Prostate gland (tissue), 2 donors: ENCODE measurements at regions of chr9 and their contacts with region 1.

Region 1: DNA sequence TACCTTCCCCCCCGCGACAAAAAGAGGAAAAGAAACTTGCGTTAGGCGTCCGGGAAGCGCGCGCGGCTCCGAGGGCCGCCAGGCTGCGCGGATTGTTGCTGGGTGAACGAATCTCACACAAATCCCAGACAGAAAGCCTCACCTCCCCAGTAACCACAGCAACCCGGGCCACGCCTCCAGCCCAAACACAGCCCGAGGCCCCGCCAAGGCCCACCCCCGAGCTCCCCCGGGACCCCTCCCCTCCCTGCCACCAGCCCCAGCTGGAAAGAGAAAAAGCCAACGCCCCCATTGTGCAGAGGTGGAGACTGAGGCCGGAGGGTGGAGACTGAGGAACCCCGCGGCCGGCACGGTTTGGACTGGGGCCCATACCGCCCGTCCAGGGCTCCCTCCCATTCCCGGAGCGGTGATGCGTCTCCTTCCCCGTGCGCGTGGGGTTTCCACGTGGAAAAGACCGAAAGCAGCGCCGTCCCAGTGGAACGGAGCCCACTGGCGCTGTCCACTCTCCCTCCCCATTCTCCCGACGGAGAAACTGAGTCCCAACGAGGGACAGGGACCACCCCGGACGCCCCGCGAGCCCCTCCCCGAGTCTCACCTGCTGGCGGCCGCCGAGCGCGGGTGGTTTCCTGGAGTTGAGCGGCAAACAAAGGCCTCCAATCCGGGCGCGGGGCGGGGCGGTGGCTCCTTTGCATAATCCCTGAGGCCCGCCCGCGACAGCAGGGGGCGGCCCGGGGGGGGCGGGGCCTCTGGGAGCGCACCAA is 10.2 kb upstream of the AKNA start:
- DNase-seq: peak; percentile 97
- H3K4me3 ChIP-seq: peak overlapping the region; percentile 56 to 81
- H3K27ac ChIP-seq: peak overlapping the region; percentile 70 to 80
- H3K4me1 ChIP-seq: peaks cover 11% of the 10 kb centered on the region
- H3K27me3 ChIP-seq: no peaks in the 10 kb centered on the region
- CTCF ChIP-seq: peak in 1 of 4 experiments; percentile 13
- POLR2A ChIP-seq: peak; percentile 77

Region 2: GRCh38 chr9:114538241-114538640 is 140.2 kb after region 1 on chr9:
- intact Hi-C with region 1: no loop called
- DNase-seq: peak; percentile 53
- H3K4me3 ChIP-seq: no peak overlapping the region
- H3K27ac ChIP-seq: no peak overlapping the region
- H3K4me1 ChIP-seq: no peaks in the 10 kb centered on the region
- H3K27me3 ChIP-seq: no peaks in the 10 kb centered on the region
- CTCF ChIP-seq: peak in 3 of 4 experiments; percentile 37 to 51 (median 46)
- POLR2A ChIP-seq: no peak

Region 3: GRCh38 chr9:114587385-114588202 is 189.6 kb after region 1 on chr9 and contains the start of gene ATP6V1G1:
- intact Hi-C with region 1: loop called (anchors 10 kb)
- DNase-seq: peak; percentile 99
- H3K4me3 ChIP-seq: peak within 1 kb of the TSS; percentile 72 to 86
- H3K27ac ChIP-seq: peak within 1 kb of the TSS; percentile 95 to 96
- H3K4me1 ChIP-seq: peaks cover 2% of the 10 kb centered on the region
- H3K27me3 ChIP-seq: no peaks in the 10 kb centered on the region
- CTCF ChIP-seq: peak in 2 of 4 experiments; percentile 30 to 31
- POLR2A ChIP-seq: peak; percentile 96
- total RNA-seq, gene ATP6V1G1: 262 to 348 TPM

Region 4: GRCh38 chr9:114611516-114612271 is 213.7 kb after region 1 on chr9:
- intact Hi-C with region 1: loop called (anchors 10 kb)
- DNase-seq: peak; percentile 59
- H3K4me3 ChIP-seq: peak overlapping the region; percentile 61 to 68
- H3K27ac ChIP-seq: peak overlapping the region; percentile 97 to 98
- H3K4me1 ChIP-seq: peaks cover 15% of the 10 kb centered on the region
- H3K27me3 ChIP-seq: no peaks in the 10 kb centered on the region
- CTCF ChIP-seq: peak in 1 of 4 experiments; percentile 2
- POLR2A ChIP-seq: peak; percentile 26